B cell (primary cell): ENCODE measurements at regions of chr1 and their contacts with region 1.

Region 1: DNA sequence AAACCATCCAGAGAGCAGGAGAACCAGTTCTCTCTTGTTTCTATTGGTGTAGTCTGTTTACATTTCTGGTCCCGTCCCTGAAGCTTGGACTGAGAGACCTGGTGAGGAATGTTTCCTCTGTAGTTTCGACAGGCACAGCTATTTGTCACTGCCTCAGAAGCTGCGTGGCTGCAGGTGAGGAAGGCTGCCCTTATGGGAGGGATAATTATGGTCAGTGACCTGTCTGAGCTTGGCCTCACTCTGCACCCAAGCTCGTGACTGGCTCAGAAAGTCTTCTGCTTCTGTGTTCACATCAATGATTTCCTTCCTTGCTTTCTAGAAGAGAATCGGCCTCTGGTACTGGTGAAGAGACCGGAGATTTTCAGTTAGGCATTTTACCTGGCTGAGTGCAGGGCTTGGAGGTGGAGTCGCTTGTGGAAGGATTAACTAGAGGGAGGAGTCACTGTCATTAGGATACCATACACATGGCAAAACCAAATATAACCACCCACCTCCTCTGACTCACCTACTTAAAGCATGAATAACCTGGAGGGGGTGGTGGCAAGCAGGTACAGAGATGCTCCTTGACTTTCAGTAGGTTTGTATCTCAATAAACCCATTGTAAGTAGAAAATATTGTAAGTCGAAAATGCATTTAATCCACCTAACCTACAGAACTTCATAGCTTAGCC is 19.9 kb upstream of the WDR26 start:
- DNase-seq: no peak
- ATAC-seq: no peak
- H3K4me3 ChIP-seq: no peak overlapping the region
- H3K4me3 Mint-ChIP-seq: no peak overlapping the region
- H3K27ac ChIP-seq: no peak overlapping the region
- H3K27ac Mint-ChIP-seq: no peak overlapping the region
- H3K4me1 ChIP-seq: peaks cover 3 to 5% of the 10 kb centered on the region in 2 donors
- H3K4me1 Mint-ChIP-seq: peaks cover 11% of the 10 kb centered on the region
- H3K27me3 ChIP-seq: no peaks in the 10 kb centered on the region
- H3K27me3 Mint-ChIP-seq: no peaks in the 10 kb centered on the region
- CTCF ChIP-seq: no peak

Region 2: DNA sequence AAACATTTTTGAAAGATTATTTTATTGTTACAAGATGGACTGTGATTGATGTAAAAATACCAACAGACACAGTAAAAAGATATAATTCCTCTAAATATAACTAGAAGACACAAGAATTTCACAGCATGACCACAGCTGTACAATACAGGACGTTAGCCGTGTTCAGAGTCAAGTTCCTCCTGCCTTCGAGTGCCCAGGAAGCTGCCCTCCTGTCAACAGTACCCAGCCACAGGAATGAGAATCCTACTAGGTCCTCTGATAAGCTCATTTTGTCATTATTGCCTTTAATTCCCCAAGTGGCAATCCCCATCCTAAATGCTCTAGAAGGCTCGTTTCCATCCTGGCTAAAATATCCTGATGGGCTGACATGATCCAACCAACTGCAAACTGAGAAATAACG is 758.6 kb before region 1 on chr1:
- CTCF ChIA-PET with region 1: interaction called, 5 read pairs
- POLR2A ChIA-PET with region 1: no interaction called
- intact Hi-C with region 1: loop called (anchors 5 kb)
- DNase-seq: no peak
- ATAC-seq: no peak
- H3K4me3 ChIP-seq: no peak overlapping the region
- H3K4me3 Mint-ChIP-seq: no peak overlapping the region
- H3K27ac ChIP-seq: no peak overlapping the region
- H3K27ac Mint-ChIP-seq: no peak overlapping the region
- H3K4me1 ChIP-seq: peaks cover 4% of the 10 kb centered on the region in 2 donors
- H3K4me1 Mint-ChIP-seq: peaks cover 8% of the 10 kb centered on the region
- H3K27me3 ChIP-seq: no peaks in the 10 kb centered on the region
- H3K27me3 Mint-ChIP-seq: peaks cover 10% of the 10 kb centered on the region
- CTCF ChIP-seq: no peak

Region 3: DNA sequence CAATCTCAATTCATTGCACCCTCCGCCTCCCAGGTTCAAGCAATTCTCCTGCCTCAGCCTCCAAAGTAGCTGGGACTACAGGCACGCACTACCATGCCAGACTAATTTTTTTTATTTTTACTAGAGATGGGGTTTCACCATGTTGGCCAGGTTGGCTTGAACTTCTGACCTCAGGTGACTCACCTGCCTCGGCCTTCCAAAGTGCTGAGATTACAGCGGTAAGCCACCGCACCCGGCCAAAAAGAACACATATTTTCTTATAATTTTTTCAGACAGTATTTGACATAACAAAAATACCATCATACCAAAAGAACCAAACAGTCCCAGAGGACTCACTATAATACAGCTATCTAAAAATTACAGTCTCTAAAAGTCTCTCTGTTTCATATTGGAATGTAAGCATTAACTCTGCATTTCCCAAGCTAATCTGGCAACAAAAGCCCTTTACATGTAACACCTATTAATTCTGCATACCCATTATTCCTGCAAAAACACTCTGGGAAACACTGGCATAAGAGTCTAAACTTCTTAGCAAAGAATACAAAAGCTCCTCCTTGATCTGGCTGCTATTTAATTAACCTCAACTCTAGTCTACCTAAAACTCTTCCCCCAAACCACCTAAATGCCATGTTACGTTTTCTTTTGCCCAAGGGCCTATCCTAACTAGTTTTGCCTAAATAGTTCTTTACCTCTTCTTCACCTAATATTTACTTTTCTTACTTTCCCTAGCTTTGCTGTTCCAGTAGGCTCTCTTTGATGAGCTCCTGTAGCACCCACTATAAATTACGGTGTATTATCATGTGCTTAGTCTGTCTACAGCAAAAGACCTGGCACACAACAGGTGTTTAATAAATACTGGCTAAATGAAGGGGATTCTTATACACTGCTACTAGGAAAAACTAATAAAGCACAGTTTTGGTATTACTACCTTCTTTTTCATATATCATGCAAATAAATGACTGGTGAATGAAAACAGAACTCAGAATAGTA is 46.7 kb before region 1 on chr1:
- CTCF ChIA-PET with region 1: interaction called, 12 read pairs
- POLR2A ChIA-PET with region 1: no interaction called
- intact Hi-C with region 1: no loop called
- DNase-seq: no peak
- ATAC-seq: no peak
- H3K4me3 ChIP-seq: no peak overlapping the region
- H3K4me3 Mint-ChIP-seq: no peak overlapping the region
- H3K27ac ChIP-seq: no peak overlapping the region
- H3K27ac Mint-ChIP-seq: no peak overlapping the region
- H3K4me1 ChIP-seq: no peaks in the 10 kb centered on the region
- H3K4me1 Mint-ChIP-seq: no peaks in the 10 kb centered on the region
- H3K27me3 ChIP-seq: no peaks in the 10 kb centered on the region
- H3K27me3 Mint-ChIP-seq: no peaks in the 10 kb centered on the region
- CTCF ChIP-seq: no peak

Region 4: GRCh38 chr1:224434691-224435317 is 19.7 kb before region 1 on chr1 and contains the start of gene WDR26:
- CTCF ChIA-PET with region 1: interaction called, 17 read pairs
- POLR2A ChIA-PET with region 1: no interaction called
- intact Hi-C with region 1: loop called (anchors 1 kb)
- DNase-seq: peak; percentile 91
- ATAC-seq: peak; percentile 83
- H3K4me3 ChIP-seq: peak within 1 kb of the TSS; percentile 65 to 97 (median 92)
- H3K4me3 Mint-ChIP-seq: peak within 1 kb of the TSS; percentile 99
- H3K27ac ChIP-seq: peak within 1 kb of the TSS; percentile 92 to 93
- H3K27ac Mint-ChIP-seq: peak within 1 kb of the TSS; percentile 99
- H3K4me1 ChIP-seq: peaks cover 27 to 41% of the 10 kb centered on the region in 2 donors
- H3K4me1 Mint-ChIP-seq: peaks cover 44% of the 10 kb centered on the region
- H3K27me3 ChIP-seq: no peaks in the 10 kb centered on the region
- H3K27me3 Mint-ChIP-seq: no peaks in the 10 kb centered on the region
- CTCF ChIP-seq: no peak
- total RNA-seq, gene WDR26: 108 and 111 TPM in 2 replicates

Region 5: DNA sequence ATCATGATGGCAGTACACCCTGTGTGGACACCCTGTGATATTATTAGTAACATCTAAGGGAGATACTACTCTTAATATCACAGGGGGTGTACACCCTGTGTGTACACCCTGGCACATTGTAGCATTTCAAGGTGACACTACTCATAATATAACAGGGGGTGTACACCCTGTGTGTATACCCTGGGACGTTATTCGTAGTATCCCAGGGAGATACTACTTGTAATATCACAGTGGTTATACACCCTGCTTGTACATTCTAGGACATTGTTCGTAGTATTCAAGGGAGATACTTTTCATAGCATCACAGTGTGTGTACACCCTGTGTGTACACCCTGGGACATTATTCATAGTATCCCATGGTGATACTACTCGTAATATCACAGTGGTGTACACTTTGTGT is 94.1 kb after region 1 on chr1:
- CTCF ChIA-PET with region 1: no interaction called
- POLR2A ChIA-PET with region 1: no interaction called
- intact Hi-C with region 1: no loop called
- DNase-seq: no peak
- ATAC-seq: no peak
- H3K4me3 ChIP-seq: no peak overlapping the region
- H3K4me3 Mint-ChIP-seq: no peak overlapping the region
- H3K27ac ChIP-seq: no peak overlapping the region
- H3K27ac Mint-ChIP-seq: no peak overlapping the region
- H3K4me1 ChIP-seq: no peaks in the 10 kb centered on the region
- H3K4me1 Mint-ChIP-seq: no peaks in the 10 kb centered on the region
- H3K27me3 ChIP-seq: no peaks in the 10 kb centered on the region
- H3K27me3 Mint-ChIP-seq: peaks cover 6% of the 10 kb centered on the region
- CTCF ChIP-seq: no peak